Common myeloid progenitor, CD34-positive (primary cell): ENCODE measurements at regions of chr11 and their contacts with region 1.

Region 1: GRCh38 chr11:45168366-45169130 is 22.1 kb downstream of the PRDM11 start:
- DNase-seq: no peak
- H3K4me3 ChIP-seq: no peak overlapping the region
- H3K27ac ChIP-seq: no peak overlapping the region
- H3K4me1 ChIP-seq: peaks cover 0 to 40% (median 28%) of the 10 kb centered on the region in 4 experiments
- H3K27me3 ChIP-seq: no peaks in the 10 kb centered on the region

Region 2: GRCh38 chr11:45073685-45074141 is 94.8 kb before region 1 on chr11:
- CTCF ChIA-PET with region 1: no interaction called
- POLR2A ChIA-PET with region 1: no interaction called
- DNase-seq: peak in 2 of 3 donors; percentile 66 to 78
- H3K4me3 ChIP-seq: no peak overlapping the region
- H3K27ac ChIP-seq: no peak overlapping the region
- H3K4me1 ChIP-seq: peaks cover 0 to 33% (median 17%) of the 10 kb centered on the region in 4 experiments
- H3K27me3 ChIP-seq: no peaks in the 10 kb centered on the region

Region 3: GRCh38 chr11:45180843-45181266 is 12.3 kb after region 1 on chr11:
- CTCF ChIA-PET with region 1: interaction called, 11 read pairs
- POLR2A ChIA-PET with region 1: interaction called, 3 read pairs
- DNase-seq: peak; percentile 70 to 89 (median 80)
- H3K4me3 ChIP-seq: peak overlapping the region in 6 of 7 experiments; percentile 19 to 62 (median 45)
- H3K27ac ChIP-seq: peak overlapping the region in 1 of 2 experiments; percentile 36
- H3K4me1 ChIP-seq: peaks cover 0 to 44% (median 32%) of the 10 kb centered on the region in 4 experiments
- H3K27me3 ChIP-seq: no peaks in the 10 kb centered on the region